GM12878 (cell line): ENCODE measurements at regions of chr7 and their contacts with region 1.

Region 1: DNA sequence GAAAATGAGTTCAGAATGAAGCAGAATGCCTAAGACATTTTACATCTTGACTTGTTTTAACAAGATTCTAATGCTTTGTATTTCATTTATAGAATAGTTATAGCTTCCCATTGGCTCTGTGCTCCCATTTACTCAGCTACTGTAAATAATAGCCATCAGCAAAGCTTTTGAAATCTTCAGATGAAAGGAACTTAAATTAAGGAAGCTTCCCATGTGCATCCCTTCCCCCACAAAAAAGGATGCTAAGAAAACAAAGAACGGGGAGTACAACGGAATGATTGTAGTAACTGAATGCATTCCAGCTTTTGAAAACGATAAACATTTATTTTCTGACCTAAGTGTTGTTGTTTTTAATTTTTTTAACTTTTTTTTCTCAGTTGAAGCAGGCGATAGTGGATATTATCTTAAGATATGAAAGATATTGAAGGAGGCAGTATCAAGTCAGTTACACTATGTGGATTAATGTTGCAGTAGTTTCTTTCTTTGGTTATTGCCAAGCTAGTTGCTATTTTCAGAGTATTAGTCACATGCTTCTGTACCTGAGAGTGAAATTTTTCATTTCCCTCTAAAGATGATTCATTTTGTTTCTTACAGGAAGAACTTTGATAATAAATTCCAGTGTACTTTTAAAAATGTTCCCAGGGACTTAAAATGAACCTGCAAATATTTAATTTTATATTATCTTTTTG is 129.2 kb downstream of the KCND2 start:
- DNase-seq: no peak
- ATAC-seq: peak; percentile 54
- H3K4me3 ChIP-seq: peak overlapping the region; percentile 58
- H3K27ac ChIP-seq: peak overlapping the region; percentile 95
- H3K4me1 ChIP-seq: peaks cover 47% of the 10 kb centered on the region
- H3K27me3 ChIP-seq: no peaks in the 10 kb centered on the region
- CTCF ChIP-seq: no peak
- EP300 ChIP-seq: peak; percentile 76 to 92; a peak in 3 of 4 replicates
- POLR2A ChIP-seq: no peak
- RAD21 ChIP-seq: no peak

Region 2: DNA sequence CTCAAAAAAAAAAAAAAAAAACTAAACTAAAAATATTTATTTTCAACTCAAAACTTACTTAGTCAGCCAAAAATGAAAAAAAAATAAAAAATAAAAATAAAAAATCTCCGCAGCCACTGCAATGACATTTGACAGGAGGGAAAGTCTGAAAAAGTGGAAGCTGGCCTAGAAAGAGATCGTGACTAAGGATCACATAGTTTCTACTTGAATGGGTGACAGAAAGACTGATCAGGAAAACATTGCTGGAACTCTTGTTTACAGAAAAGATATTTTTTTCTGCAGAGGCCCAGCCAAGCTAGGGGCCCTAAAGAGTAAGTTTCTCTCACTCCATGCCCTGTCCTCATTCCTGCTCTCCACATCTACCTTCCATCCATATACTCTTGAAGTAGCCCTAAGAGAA is 222.0 kb before region 1 on chr7:
- CTCF ChIA-PET with region 1: no interaction called
- POLR2A ChIA-PET with region 1: no interaction called
- RAD21 ChIA-PET with region 1: no interaction called
- SMC1A ChIA-PET with region 1: no interaction called
- in situ Hi-C with region 1: no loop called
- intact Hi-C with region 1: no loop called
- DNase-seq: no peak
- ATAC-seq: no peak
- H3K4me3 ChIP-seq: no peak overlapping the region
- H3K27ac ChIP-seq: no peak overlapping the region
- H3K4me1 ChIP-seq: no peaks in the 10 kb centered on the region
- H3K27me3 ChIP-seq: no peaks in the 10 kb centered on the region
- CTCF ChIP-seq: no peak
- EP300 ChIP-seq: no peak
- POLR2A ChIP-seq: no peak
- RAD21 ChIP-seq: no peak

Region 3: GRCh38 chr7:120272261-120272660 is 130.0 kb before region 1 on chr7:
- CTCF ChIA-PET with region 1: interaction called, 8 read pairs
- POLR2A ChIA-PET with region 1: interaction called, 7 read pairs
- RAD21 ChIA-PET with region 1: interaction called, 15 read pairs
- SMC1A ChIA-PET with region 1: interaction called, 49 read pairs
- in situ Hi-C with region 1: no loop called
- intact Hi-C with region 1: no loop called
- DNase-seq: peak; percentile 27
- ATAC-seq: peak; percentile 63
- H3K4me3 ChIP-seq: peak overlapping the region; percentile 82
- H3K27ac ChIP-seq: peak overlapping the region; percentile 64; the same call in 1 of the 2 replicates
- H3K4me1 ChIP-seq: no peaks in the 10 kb centered on the region
- H3K27me3 ChIP-seq: no peaks in the 10 kb centered on the region
- CTCF ChIP-seq: peak; percentile 71 to 82 (median 75)
- EP300 ChIP-seq: no peak
- POLR2A ChIP-seq: no peak
- RAD21 ChIP-seq: peak; percentile 92

Region 4: DNA sequence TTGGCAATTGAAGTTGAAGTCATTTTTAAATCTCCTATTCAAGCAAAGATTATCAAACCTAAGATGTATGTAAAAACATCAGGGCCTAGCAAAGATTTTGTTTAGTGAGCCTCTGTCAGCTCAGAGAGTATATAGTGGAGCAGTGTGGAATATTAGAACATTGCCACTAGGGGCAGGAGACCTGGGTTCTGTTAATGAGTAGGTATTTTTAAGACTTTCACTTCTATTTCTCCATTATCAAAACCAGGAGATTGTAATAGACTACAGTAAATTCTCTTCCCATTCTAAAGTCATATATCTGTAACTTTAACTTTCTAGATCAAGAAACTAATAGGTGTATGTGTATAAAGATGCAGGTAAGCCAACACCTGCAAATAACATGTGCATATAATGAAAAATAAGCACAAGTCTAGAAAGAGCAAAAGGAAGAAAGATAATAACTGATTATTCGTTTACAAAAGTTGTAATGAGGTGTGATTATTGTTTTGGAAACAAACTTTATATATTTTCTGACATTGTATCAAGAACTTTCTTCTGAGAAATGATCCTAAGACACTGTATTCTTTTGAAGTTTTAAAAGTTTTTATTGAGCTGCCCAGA is 64.8 kb before region 1 on chr7:
- CTCF ChIA-PET with region 1: interaction called, 5 read pairs
- POLR2A ChIA-PET with region 1: interaction called, 5 read pairs
- RAD21 ChIA-PET with region 1: interaction called, 6 read pairs
- SMC1A ChIA-PET with region 1: interaction called, 5 read pairs
- in situ Hi-C with region 1: no loop called
- intact Hi-C with region 1: loop called (anchors 5 kb)
- DNase-seq: no peak
- ATAC-seq: peak; percentile 82
- H3K4me3 ChIP-seq: no peak overlapping the region
- H3K27ac ChIP-seq: no peak overlapping the region
- H3K4me1 ChIP-seq: peaks cover 5% of the 10 kb centered on the region; the same call in 1 of the 2 replicates
- H3K27me3 ChIP-seq: no peaks in the 10 kb centered on the region
- CTCF ChIP-seq: peak; percentile 42 to 49 (median 47)
- EP300 ChIP-seq: no peak
- POLR2A ChIP-seq: no peak
- RAD21 ChIP-seq: peak; percentile 37; the same call in 1 of the 2 replicates

Region 5: DNA sequence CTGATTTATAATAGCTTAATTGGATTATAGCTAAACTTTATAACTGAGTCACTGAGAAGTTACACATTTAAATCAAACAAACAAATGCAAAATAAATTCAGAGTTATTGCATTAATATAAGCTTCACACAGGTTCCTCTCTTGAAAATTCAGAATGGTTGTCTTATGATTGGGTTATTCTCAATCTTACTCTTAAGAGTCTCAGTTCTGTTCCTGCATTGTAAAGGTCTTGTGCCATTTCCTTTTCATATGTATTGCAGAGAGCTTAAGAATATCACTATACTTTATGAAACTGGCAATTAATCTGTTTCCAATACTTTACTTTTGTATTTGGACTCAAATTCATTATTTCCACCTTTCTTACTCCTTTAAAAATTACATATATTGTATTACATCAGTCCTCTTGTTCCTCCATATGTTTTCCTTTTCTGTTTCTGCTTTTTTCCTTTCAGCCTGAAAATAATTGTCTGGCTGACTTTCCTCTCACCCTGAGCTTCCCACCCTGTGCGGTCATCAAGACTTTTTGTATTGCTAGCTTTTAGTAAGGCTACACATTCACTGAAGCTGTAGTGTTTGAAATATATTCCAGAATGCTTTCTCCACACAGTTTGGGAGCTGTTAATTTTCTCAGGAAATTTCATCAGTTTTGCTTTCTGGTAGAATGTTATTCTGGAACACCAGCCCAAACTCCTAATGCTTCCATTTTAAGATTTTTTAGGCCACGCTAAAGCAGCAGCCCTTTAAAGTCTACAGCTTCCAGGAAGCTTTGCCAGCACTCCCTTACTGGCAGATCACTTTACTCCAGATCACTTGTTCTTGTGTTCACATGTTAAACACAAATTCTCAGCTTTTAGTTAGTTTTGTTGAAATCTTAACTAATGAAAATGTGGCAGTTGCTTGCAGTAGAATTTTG is 10.2 kb after region 1 on chr7:
- CTCF ChIA-PET with region 1: interaction called, 11 read pairs
- POLR2A ChIA-PET with region 1: interaction called, 22 read pairs
- RAD21 ChIA-PET with region 1: interaction called, 32 read pairs
- SMC1A ChIA-PET with region 1: interaction called, 305 read pairs
- in situ Hi-C with region 1: no loop called
- intact Hi-C with region 1: no loop called
- DNase-seq: no peak
- ATAC-seq: peak; percentile 82
- H3K4me3 ChIP-seq: peak overlapping the region; percentile 36
- H3K27ac ChIP-seq: peak overlapping the region; percentile 75
- H3K4me1 ChIP-seq: peaks cover 5% of the 10 kb centered on the region; the same call in 1 of the 2 replicates
- H3K27me3 ChIP-seq: no peaks in the 10 kb centered on the region
- CTCF ChIP-seq: no peak
- EP300 ChIP-seq: no peak; a peak in 1 of 4 replicates
- POLR2A ChIP-seq: no peak
- RAD21 ChIP-seq: no peak

Region 6: GRCh38 chr7:120441850-120442249 is 39.6 kb after region 1 on chr7:
- CTCF ChIA-PET with region 1: no interaction called
- POLR2A ChIA-PET with region 1: interaction called, 6 read pairs
- RAD21 ChIA-PET with region 1: interaction called, 18 read pairs
- SMC1A ChIA-PET with region 1: interaction called, 11 read pairs
- in situ Hi-C with region 1: no loop called
- intact Hi-C with region 1: loop called (anchors 2 kb)
- DNase-seq: peak; percentile 44
- ATAC-seq: peak; percentile 90
- H3K4me3 ChIP-seq: peak overlapping the region; percentile 43; the same call in 1 of the 2 replicates
- H3K27ac ChIP-seq: peak overlapping the region; percentile 71
- H3K4me1 ChIP-seq: peaks cover 27% of the 10 kb centered on the region
- H3K27me3 ChIP-seq: no peaks in the 10 kb centered on the region
- CTCF ChIP-seq: no peak
- EP300 ChIP-seq: peak in 1 of 2 experiments; percentile 15; a peak in 1 of 4 replicates
- POLR2A ChIP-seq: no peak
- RAD21 ChIP-seq: no peak

Region 7: DNA sequence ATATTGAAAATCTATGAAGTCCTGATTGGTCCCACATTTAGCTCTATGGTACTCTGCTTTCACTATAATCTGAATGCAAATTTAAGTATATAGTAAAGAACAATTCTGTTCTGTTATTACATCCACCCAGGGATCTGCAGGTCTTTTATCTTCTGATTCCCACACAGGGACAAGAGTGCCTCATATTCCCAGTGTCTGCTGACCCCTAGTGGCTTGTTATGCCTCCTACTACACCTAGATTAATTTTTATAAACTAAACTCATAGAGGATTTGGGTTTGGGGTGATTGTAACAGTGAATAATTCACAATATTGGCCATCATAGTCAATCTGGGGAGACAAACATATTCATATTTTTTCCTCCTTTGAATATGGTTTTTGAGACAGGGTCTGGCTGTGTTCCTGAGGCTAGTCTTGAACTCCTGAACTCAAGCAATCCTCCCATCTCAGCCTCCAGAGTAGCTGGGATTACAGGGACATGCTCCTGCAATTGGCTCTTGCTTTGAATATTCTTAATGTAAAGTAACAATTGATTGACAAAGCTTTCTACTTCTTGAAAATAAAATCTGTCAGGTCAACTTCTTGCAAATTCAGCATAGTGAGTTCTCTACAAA is 152.8 kb after region 1 on chr7:
- CTCF ChIA-PET with region 1: interaction called, 6 read pairs
- POLR2A ChIA-PET with region 1: no interaction called
- RAD21 ChIA-PET with region 1: interaction called, 7 read pairs
- SMC1A ChIA-PET with region 1: interaction called, 6 read pairs
- in situ Hi-C with region 1: no loop called
- intact Hi-C with region 1: loop called (anchors 5 kb)
- DNase-seq: peak; percentile 45
- ATAC-seq: peak; percentile 85
- H3K4me3 ChIP-seq: no peak overlapping the region
- H3K27ac ChIP-seq: no peak overlapping the region
- H3K4me1 ChIP-seq: peaks cover 14% of the 10 kb centered on the region
- H3K27me3 ChIP-seq: no peaks in the 10 kb centered on the region
- CTCF ChIP-seq: peak; percentile 66 to 89 (median 69)
- EP300 ChIP-seq: no peak
- POLR2A ChIP-seq: no peak
- RAD21 ChIP-seq: peak; percentile 98

Region 8: DNA sequence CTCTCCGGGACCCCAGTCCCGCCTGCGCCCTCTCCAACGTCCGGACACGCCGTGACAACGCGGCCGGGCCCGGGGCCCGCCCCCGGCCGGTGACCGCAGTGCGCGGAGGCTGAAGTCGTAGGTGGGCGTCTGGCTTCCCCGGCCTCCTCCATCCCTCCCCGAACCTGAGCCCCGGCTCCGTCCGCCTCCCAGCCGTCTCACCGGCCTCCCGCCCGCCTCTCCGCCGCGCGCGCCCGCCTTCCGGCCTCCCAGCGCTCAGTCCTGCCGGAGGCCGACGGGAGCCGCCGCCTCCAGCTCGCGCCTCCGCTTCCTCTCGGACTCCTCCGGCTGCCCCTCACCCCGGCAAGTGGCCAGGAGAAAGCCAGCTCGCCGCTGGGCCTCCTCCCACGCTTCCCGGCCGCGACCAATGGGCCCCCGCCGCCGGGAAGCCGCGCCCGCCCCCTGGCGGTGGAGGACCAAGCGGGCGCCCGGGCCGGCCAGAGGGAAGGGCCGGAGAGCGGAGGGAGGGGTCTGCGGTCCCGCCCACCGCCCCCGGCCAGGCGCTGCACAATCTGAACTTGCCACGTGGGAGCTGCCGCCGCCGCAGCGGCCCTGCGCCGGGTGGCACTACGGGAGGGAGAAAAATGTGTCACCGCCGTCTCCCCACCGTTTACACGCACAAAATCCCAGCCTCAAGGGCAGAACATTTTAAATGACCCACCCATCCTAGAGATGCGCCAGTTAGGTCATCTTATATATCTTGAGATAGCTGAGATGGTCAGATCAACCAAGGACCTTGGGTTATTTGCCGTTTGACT is 993.9 kb after region 1 on chr7 and contains the start of gene FAM3C:
- CTCF ChIA-PET with region 1: no interaction called
- POLR2A ChIA-PET with region 1: no interaction called
- RAD21 ChIA-PET with region 1: no interaction called
- SMC1A ChIA-PET with region 1: no interaction called
- in situ Hi-C with region 1: loop called (anchors 25 kb)
- intact Hi-C with region 1: no loop called
- DNase-seq: peak; percentile 53
- ATAC-seq: peak; percentile 86
- H3K4me3 ChIP-seq: peak within 1 kb of the TSS; percentile 69
- H3K27ac ChIP-seq: peak within 1 kb of the TSS; percentile 66
- H3K4me1 ChIP-seq: peaks cover 8% of the 10 kb centered on the region
- H3K27me3 ChIP-seq: no peaks in the 10 kb centered on the region
- CTCF ChIP-seq: peak; percentile 66 to 94 (median 80); a peak in 5 of 6 replicates
- EP300 ChIP-seq: no peak; a peak in 1 of 4 replicates
- POLR2A ChIP-seq: peak; percentile 94
- RAD21 ChIP-seq: peak; percentile 77
- polyA plus RNA-seq, gene FAM3C: 11.0 to 13.6 TPM